Left cardiac atrium (tissue), 4 donors: ENCODE measurements at regions of chr5 and their contacts with region 1.

Region 1: DNA sequence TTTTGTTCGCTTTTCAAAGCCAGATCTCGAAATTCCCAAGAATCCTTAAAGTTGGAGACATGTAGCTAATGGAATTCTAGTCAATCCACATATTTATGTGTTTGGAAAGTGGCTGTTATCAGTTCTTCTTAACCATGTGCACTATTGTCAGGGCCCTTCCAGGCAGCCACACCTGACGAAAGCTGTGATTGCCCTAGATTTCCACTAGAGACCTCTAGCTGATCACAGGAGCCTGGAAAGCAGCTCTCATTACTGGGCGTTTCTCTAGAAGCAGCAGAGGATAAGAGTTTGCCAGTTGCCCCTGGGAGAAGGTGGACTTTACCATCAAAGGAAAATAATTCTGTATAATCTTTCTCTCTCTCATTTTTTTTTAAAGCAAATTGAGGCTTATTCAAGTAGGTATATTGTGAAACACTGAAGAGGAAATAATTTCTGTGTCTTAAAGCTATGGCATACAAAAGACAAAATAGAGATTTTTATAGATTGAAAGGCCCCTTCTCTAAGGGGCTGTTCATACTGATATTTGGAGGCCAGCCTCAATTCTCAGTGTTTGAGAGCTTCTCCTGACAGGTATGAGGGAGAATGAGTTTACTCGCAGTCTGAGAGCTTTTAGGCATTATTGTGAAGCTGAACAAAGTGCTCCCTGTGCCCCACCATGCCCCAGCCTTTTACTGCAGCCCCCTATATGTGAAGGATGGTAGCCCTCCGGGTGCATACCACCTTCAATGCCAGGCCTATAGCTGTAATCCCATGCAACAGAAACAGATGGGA is 405.4 kb upstream of the ACTBL2 start:
- DNase-seq: peak; percentile 36
- ATAC-seq: peak; percentile 87 to 96

Region 2: GRCh38 chr5:57298295-57298984 is 589.6 kb before region 1 on chr5:
- intact Hi-C with region 1: loop called in 1 of 2 experiments (anchors 10 kb)
- DNase-seq: peak; percentile 84
- ATAC-seq: peak; percentile 90 to 94

Region 3: DNA sequence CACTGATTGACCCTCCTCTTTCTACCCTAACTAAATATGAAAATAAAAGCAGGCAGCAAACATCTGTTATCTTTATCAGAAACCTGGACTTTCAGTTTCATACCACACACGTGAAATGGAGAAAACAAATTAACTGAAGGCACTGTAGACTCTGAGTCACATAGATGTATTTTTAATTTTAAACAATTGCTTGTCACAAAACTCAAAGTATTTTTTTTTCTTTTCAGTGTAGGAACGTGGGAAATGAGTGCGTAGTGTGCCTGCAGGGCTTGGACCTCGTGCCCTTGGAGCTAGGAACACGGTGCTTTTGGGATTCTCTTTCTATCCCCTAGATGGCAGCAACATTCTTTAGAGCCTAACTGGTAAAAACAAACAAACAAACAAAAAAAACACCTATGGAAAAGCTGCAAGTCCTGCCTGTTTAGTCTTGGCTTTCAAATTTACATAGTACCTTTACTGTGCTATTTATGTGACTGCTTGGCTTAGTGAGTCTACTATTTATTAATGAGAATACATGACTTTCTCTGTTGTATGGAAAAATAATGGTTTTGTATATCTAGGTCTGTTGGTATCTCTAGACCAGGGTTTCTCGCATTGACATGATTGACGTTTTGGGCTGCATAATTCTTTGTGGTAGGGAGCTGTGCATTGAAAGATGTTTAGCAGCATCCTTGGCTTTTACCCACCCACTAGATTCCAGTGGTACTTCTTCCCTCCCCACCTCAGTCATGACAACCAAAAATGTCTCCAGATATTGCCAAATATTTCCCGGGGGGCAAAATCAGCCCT is 388.6 kb before region 1 on chr5:
- intact Hi-C with region 1: loop called in 1 of 2 experiments (anchors 10 kb)
- DNase-seq: no peak
- ATAC-seq: peak; percentile 32

Region 4: GRCh38 chr5:57779383-57780223 is 108.4 kb before region 1 on chr5:
- intact Hi-C with region 1: loop called (anchors 5 to 10 kb)
- DNase-seq: no peak
- ATAC-seq: peak; percentile 83 to 87

Region 5: DNA sequence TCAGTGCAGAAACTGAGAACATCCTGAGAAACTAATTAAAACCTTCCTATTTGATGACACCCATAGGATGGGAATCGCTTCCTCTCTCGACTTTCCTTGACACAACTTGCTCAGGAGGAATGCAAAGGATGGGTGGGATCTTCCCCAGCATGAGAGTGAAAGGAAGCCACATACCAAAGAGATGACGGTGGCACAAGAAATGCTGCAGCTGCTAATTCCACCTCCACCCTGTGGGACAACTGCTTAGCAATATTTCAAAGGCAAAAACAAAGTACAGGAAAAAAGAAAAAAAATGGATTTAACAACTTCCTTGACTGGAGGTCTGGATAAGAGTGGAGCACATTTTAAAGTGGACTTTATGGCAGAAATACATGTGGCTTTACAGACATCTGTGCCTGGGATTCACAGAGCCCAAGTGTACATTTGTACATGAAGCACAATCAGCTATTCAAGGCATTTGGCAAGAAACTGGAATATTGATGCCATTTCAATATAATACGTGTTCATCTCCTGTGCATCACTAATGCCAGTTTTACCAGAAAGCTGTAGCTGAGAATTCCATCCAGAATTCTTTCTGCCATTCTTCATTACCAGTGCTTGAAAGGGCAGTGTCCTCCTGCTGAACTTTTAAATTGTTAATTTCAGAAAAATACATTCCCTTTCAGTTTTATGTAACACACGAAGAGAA is 46.2 kb before region 1 on chr5:
- intact Hi-C with region 1: no loop called
- DNase-seq: no peak
- ATAC-seq: peak in 1 of 2 donors; percentile 56

Region 6: GRCh38 chr5:58188262-58188651 is 300.2 kb after region 1 on chr5:
- intact Hi-C with region 1: loop called in 1 of 2 experiments (anchors 10 kb)
- DNase-seq: no peak
- ATAC-seq: no peak

Region 7: GRCh38 chr5:58286741-58287140 is 398.7 kb after region 1 on chr5:
- intact Hi-C with region 1: no loop called
- DNase-seq: no peak
- ATAC-seq: no peak